ENCODE measurements at regions of chr7 and their contacts with region 1.

Region 1: GRCh38 chr7:91264046-91264923 is at the start of gene FZD1:
- DNase-seq: peak; percentile 92 to 97 (median 92)
- H3K4me3 ChIP-seq: peak within 1 kb of the TSS; percentile 87 to 96 (median 90)
- H3K4me3 Mint-ChIP-seq: peak within 1 kb of the TSS; percentile 96 to 98
- H3K27ac ChIP-seq: peak within 1 kb of the TSS; percentile 35 to 78
- H3K27ac Mint-ChIP-seq: peak within 1 kb of the TSS; percentile 73 to 93 (median 87)
- H3K4me1 ChIP-seq: peaks cover 31 to 41% of the 10 kb centered on the region in 2 donors
- H3K4me1 Mint-ChIP-seq: peaks cover 43% of the 10 kb centered on the region
- H3K27me3 ChIP-seq: peaks cover 14 to 68% of the 10 kb centered on the region in 2 donors
- H3K27me3 Mint-ChIP-seq: peaks cover 17 to 25% (median 18%) of the 10 kb centered on the region in 3 donors
- CTCF ChIP-seq: no peak
- polyA plus RNA-seq, gene FZD1: 3.6 to 10.1 (median 7.9) TPM

Region 2: GRCh38 chr7:91228927-91229558 is 35.2 kb before region 1 on chr7:
- intact Hi-C with region 1: no loop called
- DNase-seq: no peak
- H3K4me3 ChIP-seq: no peak overlapping the region
- H3K4me3 Mint-ChIP-seq: no peak overlapping the region
- H3K27ac ChIP-seq: no peak overlapping the region
- H3K27ac Mint-ChIP-seq: no peak overlapping the region
- H3K4me1 ChIP-seq: no peaks in the 10 kb centered on the region
- H3K4me1 Mint-ChIP-seq: no peaks in the 10 kb centered on the region
- H3K27me3 ChIP-seq: no peaks in the 10 kb centered on the region
- H3K27me3 Mint-ChIP-seq: peaks cover 2 to 7% (median 5%) of the 10 kb centered on the region in 3 donors
- CTCF ChIP-seq: no peak

Region 3: DNA sequence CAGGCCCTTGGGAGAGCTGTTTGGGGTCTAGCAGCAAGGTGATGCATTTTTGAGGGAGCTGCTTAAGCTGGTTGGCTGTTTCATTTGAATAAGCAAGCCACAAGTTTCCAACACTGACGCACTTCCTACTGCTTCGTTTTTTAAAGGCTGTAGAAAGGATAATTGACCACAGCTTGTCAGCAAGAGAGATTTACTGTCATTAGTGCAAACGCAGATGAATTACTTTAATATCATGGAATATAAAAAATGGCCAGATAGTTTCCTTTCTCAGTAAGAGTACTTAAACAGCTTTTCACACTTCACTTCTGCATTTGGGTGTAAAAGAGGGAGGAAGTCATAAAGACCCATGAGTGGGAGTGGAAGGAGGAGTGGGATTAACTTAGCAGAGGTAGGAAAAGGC is 61.4 kb after region 1 on chr7:
- intact Hi-C with region 1: loop called in 1 of 2 experiments (anchors 10 kb)
- DNase-seq: peak in 2 of 3 donors; percentile 13 to 18
- H3K4me3 ChIP-seq: peak overlapping the region in 1 of 3 experiments; percentile 50
- H3K4me3 Mint-ChIP-seq: peak overlapping the region in 1 of 2 donors; percentile 71
- H3K27ac ChIP-seq: peak overlapping the region in 1 of 2 donors; percentile 75
- H3K27ac Mint-ChIP-seq: peak overlapping the region; percentile 0 to 93 (median 72)
- H3K4me1 ChIP-seq: peaks cover 28 to 38% of the 10 kb centered on the region in 2 donors
- H3K4me1 Mint-ChIP-seq: peaks cover 41% of the 10 kb centered on the region
- H3K27me3 ChIP-seq: no peaks in the 10 kb centered on the region
- H3K27me3 Mint-ChIP-seq: no peaks in the 10 kb centered on the region
- CTCF ChIP-seq: no peak